ENCODE measurements at regions of chr12 and their contacts with region 1.

Region 1: DNA sequence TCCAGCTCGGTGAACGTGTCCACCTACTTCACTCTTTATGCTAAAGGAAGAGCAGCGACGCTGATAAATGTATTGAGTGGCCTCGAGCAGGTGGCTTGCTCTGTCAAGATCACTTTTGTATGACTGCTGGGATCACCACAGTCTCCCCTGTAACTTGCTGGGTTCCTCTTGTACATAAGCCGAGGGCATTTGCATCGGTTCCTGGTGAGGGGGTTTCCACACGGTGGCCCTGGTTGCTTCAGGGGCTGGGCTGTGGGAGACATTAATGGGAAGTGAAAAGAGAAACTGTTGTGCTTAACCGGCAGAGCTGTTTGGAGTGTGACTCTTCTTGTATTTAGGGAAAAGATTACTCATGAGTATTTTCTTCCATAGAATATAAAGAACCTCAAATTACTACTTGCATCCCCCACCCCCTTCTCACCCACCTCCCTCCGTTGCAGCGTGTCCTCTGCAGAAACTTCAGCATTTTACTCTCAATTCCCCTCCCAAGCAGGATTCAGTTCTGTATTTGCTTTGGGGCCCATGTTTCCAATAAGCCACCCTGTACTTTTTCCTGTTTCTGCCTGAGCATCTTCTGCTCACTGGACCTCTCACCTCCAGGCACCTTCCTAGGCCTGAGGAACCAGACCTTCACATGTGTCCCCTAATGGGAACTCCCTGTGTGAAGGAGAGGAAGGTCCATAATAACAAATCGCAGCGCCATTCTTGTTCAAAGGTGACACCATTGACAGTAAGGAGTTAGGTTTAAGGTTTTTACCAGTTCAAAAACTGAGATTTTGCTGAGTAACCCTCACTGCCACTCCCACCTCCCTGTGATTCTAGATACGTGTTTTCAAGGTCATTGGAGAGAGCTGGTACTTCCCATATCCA is 187.0 kb downstream of the ETV6 start:
- DNase-seq: peak in 8 of 42 donors; percentile 29 to 70 (median 45)

Region 2: GRCh38 chr12:11695321-11695720 is 141.2 kb before region 1 on chr12:
- intact Hi-C with region 1: no loop called
- DNase-seq: peak in 1 of 42 donors; percentile 41

Region 3: GRCh38 chr12:11765817-11766794 is 70.4 kb before region 1 on chr12:
- intact Hi-C with region 1: loop called (anchors 10 kb)
- DNase-seq: peak in 41 of 42 donors; percentile 25 to 81 (median 58)

Measured in head of caudate nucleus (tissue), 42 donors.